Stomach (tissue), 19 donors: ENCODE measurements at regions of chr3 and their contacts with region 1.

Region 1: DNA sequence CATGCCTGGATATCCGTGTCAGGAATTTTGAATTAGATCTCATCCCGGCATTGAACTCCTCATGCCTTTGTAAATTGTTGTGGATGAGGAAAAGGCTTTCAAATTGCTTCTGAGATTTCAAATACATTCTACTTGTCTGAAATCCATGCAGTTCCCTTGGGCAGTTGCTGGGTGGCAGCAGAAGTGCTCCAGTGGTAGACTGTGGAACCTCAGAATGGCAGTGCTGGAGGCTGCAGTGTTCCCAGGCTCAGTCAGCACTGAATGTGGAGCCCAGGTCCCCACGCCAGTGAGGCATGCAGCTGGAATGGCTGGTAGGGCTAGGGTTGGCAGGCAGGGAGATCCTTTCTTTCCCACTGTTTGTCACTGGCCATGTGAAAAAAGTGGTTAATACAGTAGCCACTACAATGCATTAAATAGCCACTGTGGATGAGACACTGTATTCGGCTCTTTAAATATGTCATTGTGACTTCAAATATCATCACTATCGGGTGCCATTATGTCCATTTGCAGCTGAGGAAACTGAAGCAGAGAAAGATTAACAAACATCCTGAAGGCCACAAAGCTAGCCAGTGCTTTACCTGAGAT is 98.6 kb downstream of the TPRG1 start:
- DNase-seq: peak; percentile 71 to 87
- H3K4me3 ChIP-seq: no peak overlapping the region
- H3K27ac ChIP-seq: no peak overlapping the region
- H3K4me1 ChIP-seq: peaks cover 0 to 3% (median 0%) of the 10 kb centered on the region in 4 donors
- H3K27me3 ChIP-seq: no peaks in the 10 kb centered on the region
- CTCF ChIP-seq: peak in 5 of 7 experiments; percentile 26 to 71 (median 53)
- EP300 ChIP-seq: no peak
- POLR2A ChIP-seq: no peak

Region 2: DNA sequence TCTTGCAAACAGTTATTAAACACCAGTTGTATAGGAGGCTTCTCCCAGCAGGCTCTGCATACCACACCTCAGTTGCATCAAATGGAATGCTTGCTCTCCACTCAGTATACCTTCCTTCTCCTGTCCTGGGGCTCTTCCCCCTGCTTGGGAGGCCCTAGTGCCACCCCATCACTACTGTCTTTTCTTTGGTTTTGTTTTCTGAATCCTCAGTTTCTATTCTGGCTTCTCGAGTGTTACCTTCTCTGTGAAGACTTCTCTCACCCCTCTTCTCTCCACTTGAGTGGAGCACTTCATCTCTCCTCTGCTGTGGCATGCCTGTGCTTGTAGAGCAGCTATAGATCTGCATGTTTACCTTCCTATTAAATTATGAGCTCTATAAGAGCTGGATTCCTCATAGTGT is 174.2 kb before region 1 on chr3:
- intact Hi-C with region 1: no loop called
- DNase-seq: no peak
- H3K4me3 ChIP-seq: no peak overlapping the region
- H3K27ac ChIP-seq: no peak overlapping the region
- H3K4me1 ChIP-seq: no peaks in the 10 kb centered on the region
- H3K27me3 ChIP-seq: no peaks in the 10 kb centered on the region
- CTCF ChIP-seq: no peak
- EP300 ChIP-seq: no peak
- POLR2A ChIP-seq: no peak

Region 3: DNA sequence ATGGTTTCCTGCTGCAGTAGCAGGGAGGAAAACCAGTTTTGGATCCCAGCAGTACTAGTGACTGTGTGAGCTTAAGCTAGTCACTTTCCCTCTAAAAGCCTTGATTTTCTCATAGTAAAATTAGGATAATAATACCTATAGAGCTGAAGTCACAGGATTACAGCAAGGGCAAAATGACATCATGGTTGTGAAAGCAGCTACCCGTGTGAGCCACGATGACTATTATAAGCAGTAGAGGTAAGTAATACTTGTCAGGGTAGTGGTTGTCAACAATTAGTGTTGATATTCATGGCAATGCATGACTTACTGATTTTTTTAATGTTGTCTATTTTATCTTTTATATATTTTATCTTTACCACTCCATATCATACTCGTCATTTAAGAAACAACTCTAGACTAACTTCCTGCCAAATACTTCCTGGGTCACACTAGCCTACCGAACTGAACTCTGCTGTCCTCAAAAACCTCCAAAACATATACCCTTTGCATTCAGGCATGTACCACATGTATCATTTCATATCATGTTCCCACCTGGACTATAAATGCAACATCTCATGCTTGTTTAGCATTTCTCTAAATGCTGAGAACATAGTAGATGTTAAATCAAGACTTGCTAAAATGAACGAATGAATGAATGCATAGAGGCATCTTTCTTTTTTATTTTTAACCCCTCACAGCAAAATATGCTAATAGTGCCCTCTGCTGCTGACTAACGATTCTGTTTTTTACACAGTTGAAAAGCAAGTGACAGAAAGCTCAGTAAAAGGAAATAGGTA is 677.8 kb after region 1 on chr3:
- intact Hi-C with region 1: loop called (anchors 10 kb)
- DNase-seq: peak in 1 of 2 donors; percentile 58
- H3K4me3 ChIP-seq: no peak overlapping the region
- H3K27ac ChIP-seq: no peak overlapping the region
- H3K4me1 ChIP-seq: peaks cover 0 to 8% (median 0%) of the 10 kb centered on the region in 4 donors
- H3K27me3 ChIP-seq: no peaks in the 10 kb centered on the region
- CTCF ChIP-seq: peak in 4 of 7 experiments; percentile 17 to 60 (median 42)
- EP300 ChIP-seq: no peak
- POLR2A ChIP-seq: no peak